Activated naive CD4-positive, alpha-beta T cell treated with anti-CD3 and anti-CD28 coated beads for 36 hours (primary cell): ENCODE measurements at regions of chr16 and their contacts with region 1.

Region 1: GRCh38 chr16:20806168-20807050 is at the starts of genes ERI2 and REXO5:
- DNase-seq: peak; percentile 87
- H3K4me3 Mint-ChIP-seq: peak within 1 kb of the TSS; percentile 98
- H3K27ac Mint-ChIP-seq: peak within 1 kb of the TSS; percentile 98
- H3K4me1 Mint-ChIP-seq: peaks cover 12% of the 10 kb centered on the region
- H3K27me3 Mint-ChIP-seq: no peaks in the 10 kb centered on the region
- total RNA-seq, gene ERI2: 18.4 to 19.6 TPM
- total RNA-seq, gene REXO5: 26.4 to 27.8 TPM

Region 2: DNA sequence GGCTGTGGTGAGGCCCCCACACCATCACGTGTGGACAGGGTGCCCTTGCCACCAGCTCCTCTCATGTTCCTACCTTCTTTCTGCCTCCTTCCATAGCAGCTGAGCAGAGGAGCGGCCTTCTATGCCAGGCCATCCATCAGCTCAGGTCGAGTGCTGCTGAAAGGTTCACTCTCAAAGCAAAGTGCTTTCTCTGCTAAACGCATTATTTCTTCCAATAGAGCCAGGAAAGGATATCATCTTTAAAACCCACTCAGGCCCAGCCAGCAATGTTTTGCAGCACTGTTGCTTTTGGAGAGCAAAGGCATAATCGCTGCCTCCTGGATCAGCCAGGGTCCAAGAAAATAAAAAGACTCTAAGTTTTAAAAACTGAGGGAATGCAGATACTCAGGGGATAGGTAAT is 866.9 kb before region 1 on chr16:
- CTCF ChIA-PET with region 1: no interaction called
- intact Hi-C with region 1: no loop called
- DNase-seq: no peak
- H3K4me3 Mint-ChIP-seq: no peak overlapping the region
- H3K27ac Mint-ChIP-seq: no peak overlapping the region
- H3K4me1 Mint-ChIP-seq: no peaks in the 10 kb centered on the region
- H3K27me3 Mint-ChIP-seq: peaks cover 4% of the 10 kb centered on the region

Region 3: DNA sequence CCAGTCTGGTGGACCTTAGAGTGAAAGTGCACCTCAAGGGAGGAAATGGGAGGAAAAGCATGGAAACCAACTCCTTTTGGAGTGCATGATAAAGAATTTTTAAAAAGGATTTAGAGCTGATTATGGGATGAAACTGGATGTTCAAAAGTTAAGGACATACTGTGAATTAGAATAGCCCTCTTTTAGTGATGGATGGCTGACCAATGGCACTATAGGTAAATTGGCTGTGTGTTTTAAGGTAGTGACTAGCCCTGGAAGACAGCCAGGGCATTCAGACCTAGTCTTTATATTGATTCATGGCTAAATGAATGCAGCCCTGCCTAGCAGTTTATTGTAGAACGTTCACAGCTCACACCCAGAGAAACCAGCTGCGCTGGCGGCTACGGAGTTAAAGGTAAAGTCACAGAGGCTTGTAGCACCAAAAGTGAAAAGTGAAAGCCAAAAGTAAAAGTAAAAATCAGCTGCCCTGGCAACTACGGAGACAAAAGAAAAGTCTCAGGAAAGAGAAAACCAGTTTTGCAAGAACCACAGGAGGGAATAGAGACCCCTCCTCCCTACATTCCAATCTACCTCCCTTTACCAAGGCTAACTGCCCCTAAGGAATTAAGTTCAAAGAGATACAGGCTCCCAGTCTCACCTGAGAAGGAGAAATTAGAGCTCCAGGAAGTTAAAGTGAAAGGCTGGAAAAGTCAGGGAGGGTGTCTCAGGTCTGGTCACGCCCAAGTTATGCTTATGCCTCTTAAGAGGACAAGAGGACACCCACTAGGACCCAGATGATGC is 130.7 kb before region 1 on chr16:
- CTCF ChIA-PET with region 1: interaction called, 3 read pairs
- intact Hi-C with region 1: loop called (anchors 5 kb)
- DNase-seq: peak; percentile 69
- H3K4me3 Mint-ChIP-seq: peak overlapping the region; percentile 75
- H3K27ac Mint-ChIP-seq: peak overlapping the region; percentile 31
- H3K4me1 Mint-ChIP-seq: peaks cover 33% of the 10 kb centered on the region
- H3K27me3 Mint-ChIP-seq: no peaks in the 10 kb centered on the region

Region 4: GRCh38 chr16:20735490-20735889 is 70.9 kb before region 1 on chr16:
- CTCF ChIA-PET with region 1: no interaction called
- intact Hi-C with region 1: loop called (anchors 1 kb)
- DNase-seq: no peak
- H3K4me3 Mint-ChIP-seq: no peak overlapping the region
- H3K27ac Mint-ChIP-seq: peak overlapping the region; percentile 77
- H3K4me1 Mint-ChIP-seq: peaks cover 44% of the 10 kb centered on the region
- H3K27me3 Mint-ChIP-seq: no peaks in the 10 kb centered on the region

Region 5: GRCh38 chr16:20741554-20742285 is 64.7 kb before region 1 on chr16 and contains the start of gene THUMPD1:
- CTCF ChIA-PET with region 1: no interaction called
- intact Hi-C with region 1: loop called (anchors 1 kb)
- DNase-seq: peak; percentile 100
- H3K4me3 Mint-ChIP-seq: peak within 1 kb of the TSS; percentile 94
- H3K27ac Mint-ChIP-seq: peak within 1 kb of the TSS; percentile 95
- H3K4me1 Mint-ChIP-seq: peaks cover 29% of the 10 kb centered on the region
- H3K27me3 Mint-ChIP-seq: no peaks in the 10 kb centered on the region
- total RNA-seq, gene THUMPD1: 47.5 to 49.8 TPM

Region 6: GRCh38 chr16:20763461-20764232 is 42.8 kb before region 1 on chr16 and contains the start of gene ACSM3:
- CTCF ChIA-PET with region 1: no interaction called
- intact Hi-C with region 1: loop called (anchors 1 kb)
- DNase-seq: peak; percentile 83
- H3K4me3 Mint-ChIP-seq: peak within 1 kb of the TSS; percentile 87
- H3K27ac Mint-ChIP-seq: peak within 1 kb of the TSS; percentile 94
- H3K4me1 Mint-ChIP-seq: peaks cover 25% of the 10 kb centered on the region
- H3K27me3 Mint-ChIP-seq: no peaks in the 10 kb centered on the region
- total RNA-seq, gene ACSM3: 29.6 to 35.0 TPM

Region 7: DNA sequence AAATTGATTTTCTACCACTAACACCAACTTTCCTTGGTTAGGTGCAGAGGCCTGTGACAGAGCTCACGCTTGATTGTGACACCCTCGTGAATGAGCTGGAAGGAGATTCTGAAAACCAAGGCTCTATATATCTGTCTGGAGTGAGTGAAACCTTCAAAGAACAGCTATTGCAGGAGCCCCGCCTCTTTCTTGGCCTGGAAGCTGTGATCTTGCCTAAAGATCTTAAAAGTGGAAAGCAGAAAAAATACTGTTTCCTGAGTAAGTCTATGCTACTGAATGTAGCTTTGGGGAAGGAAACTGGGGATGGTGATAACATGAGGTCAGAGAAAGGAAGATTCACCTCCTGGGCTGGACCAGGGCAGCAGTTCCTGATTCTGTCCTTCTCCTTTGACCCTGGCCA is 38.2 kb after region 1 on chr16:
- CTCF ChIA-PET with region 1: no interaction called
- intact Hi-C with region 1: loop called (anchors 5 kb)
- DNase-seq: peak; percentile 46
- H3K4me3 Mint-ChIP-seq: no peak overlapping the region
- H3K27ac Mint-ChIP-seq: peak overlapping the region; percentile 9
- H3K4me1 Mint-ChIP-seq: peaks cover 21% of the 10 kb centered on the region
- H3K27me3 Mint-ChIP-seq: no peaks in the 10 kb centered on the region